Naive thymus-derived CD8-positive, alpha-beta T cell (primary cell): ENCODE measurements at regions of chr22 and their contacts with region 1.

Region 1: GRCh38 chr22:42614312-42615091 is at the start of gene POLDIP3:
- DNase-seq: peak; percentile 96 to 99 (median 98)
- ATAC-seq: peak; percentile 69 to 72
- H3K4me3 Mint-ChIP-seq: peak within 1 kb of the TSS; percentile 91 to 98 (median 96)
- H3K27ac Mint-ChIP-seq: peak within 1 kb of the TSS; percentile 98 to 100 (median 100)
- H3K4me1 Mint-ChIP-seq: peaks cover 25 to 64% (median 57%) of the 10 kb centered on the region in 4 donors
- H3K27me3 Mint-ChIP-seq: peaks cover 0 to 2% (median 0%) of the 10 kb centered on the region in 5 donors
- polyA plus RNA-seq, gene POLDIP3: 60.7 to 93.6 (median 70.5) TPM

Region 2: DNA sequence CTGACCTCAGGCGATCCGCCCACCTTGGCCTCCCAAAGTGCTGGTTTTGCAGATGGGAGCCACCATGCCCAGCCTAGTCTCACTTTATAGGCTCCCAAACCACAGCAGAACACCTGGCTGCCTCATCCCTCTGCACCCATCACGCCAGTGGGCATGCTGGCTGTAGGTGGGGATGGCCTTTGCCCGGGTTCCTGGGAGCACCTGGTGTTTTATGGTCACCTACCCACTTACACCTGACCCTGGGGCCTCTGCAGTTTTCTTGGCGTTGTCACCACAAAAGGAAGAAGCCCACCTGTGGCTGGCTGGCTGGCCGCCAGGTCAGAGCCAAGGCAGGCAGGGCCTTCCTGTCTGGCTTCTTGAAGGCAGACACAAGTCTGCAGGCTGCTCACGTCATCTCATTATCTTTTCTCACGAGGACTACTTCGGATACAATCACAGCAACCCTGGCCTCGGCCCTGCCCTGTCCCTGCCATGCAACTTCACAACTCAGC is 103.1 kb before region 1 on chr22:
- POLR2A ChIA-PET with region 1: no interaction called
- DNase-seq: no peak
- ATAC-seq: peak in 1 of 2 donors; percentile 18
- H3K4me3 Mint-ChIP-seq: peak overlapping the region in 1 of 10 donors; percentile 62
- H3K27ac Mint-ChIP-seq: peak overlapping the region in 5 of 10 donors; percentile 2 to 83 (median 48)
- H3K4me1 Mint-ChIP-seq: peaks cover 5 to 12% (median 7%) of the 10 kb centered on the region in 4 donors
- H3K27me3 Mint-ChIP-seq: no peaks in the 10 kb centered on the region

Region 3: DNA sequence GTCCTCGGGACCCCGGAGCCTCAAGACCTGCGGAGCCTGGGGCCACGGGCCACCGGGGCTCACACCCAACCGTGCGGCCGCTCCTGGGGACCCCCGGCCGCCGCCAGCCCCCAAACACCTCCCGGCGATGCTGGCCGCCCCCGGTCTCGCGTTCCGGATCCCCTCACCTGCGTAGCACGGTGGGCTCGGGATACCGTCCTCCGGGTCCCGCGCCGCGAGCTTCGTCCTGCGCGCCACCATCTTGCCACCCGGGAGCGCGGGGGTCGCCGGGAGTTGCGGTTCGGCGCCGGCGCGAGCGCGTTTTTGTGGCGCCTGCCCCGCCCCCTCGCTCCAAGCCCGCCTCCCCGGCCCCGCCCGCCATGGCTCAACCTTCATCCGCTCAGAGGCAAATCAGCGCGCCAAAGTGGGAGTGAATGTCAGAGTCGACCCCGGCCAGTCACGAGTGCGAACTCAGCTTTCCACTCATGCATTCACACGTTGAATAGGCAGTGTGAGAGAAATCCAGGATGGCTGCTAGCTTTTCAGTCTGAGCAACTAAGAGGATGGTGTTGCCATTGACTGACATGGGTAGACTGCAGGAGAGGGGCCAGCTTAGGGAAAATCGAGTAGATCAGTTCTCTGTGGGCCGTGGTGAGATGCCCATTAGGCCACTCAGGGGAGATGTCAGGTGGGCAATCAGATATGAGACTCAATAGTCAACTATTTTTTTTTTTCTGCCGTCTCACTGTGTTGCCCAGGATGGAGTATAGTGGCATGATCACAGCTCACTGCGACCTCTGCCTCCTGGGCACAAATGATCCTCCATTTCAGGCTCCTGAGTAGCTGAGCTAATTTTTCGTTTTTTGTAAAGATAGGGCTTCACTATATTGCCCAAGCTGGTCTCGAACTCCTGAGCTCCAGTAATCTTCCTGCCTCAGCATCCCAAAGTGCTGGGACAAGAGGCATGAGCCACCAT is 32.5 kb before region 1 on chr22:
- POLR2A ChIA-PET with region 1: interaction called, 21 read pairs
- DNase-seq: peak; percentile 68 to 88 (median 80)
- ATAC-seq: peak; percentile 88 to 90
- H3K4me3 Mint-ChIP-seq: peak overlapping the region; percentile 84 to 98 (median 94)
- H3K27ac Mint-ChIP-seq: peak overlapping the region; percentile 60 to 95 (median 88)
- H3K4me1 Mint-ChIP-seq: peaks cover 10 to 18% (median 16%) of the 10 kb centered on the region in 4 donors
- H3K27me3 Mint-ChIP-seq: no peaks in the 10 kb centered on the region

Region 4: DNA sequence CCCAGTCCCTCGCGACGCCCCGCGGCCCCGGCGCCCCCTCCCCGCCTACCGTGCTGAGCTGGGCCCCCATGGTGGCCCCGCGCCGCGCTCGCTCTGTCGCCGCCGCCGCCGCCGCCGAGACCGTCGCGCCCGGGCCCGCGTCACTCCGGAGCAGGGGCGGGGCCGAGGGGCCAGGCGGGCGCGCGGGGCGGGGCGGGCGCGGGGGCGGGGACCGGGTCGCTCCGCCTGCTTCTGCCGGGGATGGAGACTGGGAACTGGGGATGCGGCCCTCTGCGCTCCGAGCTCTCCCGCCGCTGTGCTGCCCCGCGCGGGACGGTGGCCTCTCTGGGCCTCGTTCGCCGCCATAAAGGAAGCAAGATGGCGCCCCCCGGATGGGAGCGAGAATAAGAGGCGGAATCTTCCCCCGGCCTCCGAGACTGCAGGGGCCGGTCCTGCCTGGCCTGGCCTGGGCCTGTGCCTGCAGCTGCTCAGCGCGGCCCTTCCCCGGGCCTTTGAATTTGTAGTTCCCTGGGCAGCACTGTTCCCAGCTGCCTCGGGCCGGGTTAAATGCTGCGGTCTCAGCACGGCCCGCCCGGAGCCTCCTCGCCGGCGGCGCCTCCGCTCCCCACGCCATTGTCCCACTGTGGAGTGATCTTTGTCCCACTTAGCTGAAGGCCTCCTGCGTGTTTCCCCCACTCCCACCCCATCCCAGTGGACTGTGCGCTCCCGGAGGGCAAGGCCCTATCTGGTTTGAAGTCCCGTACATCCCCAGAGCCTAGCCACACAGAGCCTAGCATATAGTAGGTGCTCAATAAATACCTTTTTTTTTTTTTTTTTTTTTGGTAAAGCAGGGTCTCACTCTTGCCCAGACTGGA is 35.0 kb after region 1 on chr22 and contains the start of gene CYB5R3:
- POLR2A ChIA-PET with region 1: interaction called, 54 read pairs
- DNase-seq: peak; percentile 62 to 84 (median 76)
- ATAC-seq: peak; percentile 79 to 81
- H3K4me3 Mint-ChIP-seq: peak within 1 kb of the TSS; percentile 81 to 100 (median 98)
- H3K27ac Mint-ChIP-seq: peak within 1 kb of the TSS; percentile 93 to 100 (median 98)
- H3K4me1 Mint-ChIP-seq: peaks cover 12 to 43% (median 40%) of the 10 kb centered on the region in 4 donors
- H3K27me3 Mint-ChIP-seq: no peaks in the 10 kb centered on the region
- polyA plus RNA-seq, gene CYB5R3: 37.1 to 70.2 (median 37.9) TPM

Region 5: DNA sequence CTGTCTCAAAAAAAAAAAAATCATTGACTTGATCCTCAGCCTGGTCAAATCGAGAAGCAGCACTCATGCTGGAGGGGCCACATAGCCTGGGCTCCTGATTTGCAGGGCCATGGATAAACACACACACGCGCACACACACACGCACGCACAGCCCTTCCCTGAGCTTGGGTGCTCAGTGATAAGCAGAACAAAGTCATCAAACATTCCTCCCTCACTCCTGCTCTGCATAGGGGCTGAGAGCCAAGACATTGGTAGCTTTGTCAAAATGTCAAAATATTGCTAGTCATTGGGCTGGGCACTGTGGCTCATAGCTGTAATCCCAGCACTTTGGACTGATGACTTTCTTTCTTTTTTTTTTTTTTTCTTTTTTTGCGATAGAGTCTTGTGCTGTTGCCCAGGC is 140.2 kb after region 1 on chr22:
- POLR2A ChIA-PET with region 1: no interaction called
- DNase-seq: no peak
- ATAC-seq: no peak
- H3K4me3 Mint-ChIP-seq: no peak overlapping the region
- H3K27ac Mint-ChIP-seq: no peak overlapping the region
- H3K4me1 Mint-ChIP-seq: peaks cover 0 to 6% (median 0%) of the 10 kb centered on the region in 4 donors
- H3K27me3 Mint-ChIP-seq: peaks cover 0 to 8% (median 5%) of the 10 kb centered on the region in 5 donors

Region 6: DNA sequence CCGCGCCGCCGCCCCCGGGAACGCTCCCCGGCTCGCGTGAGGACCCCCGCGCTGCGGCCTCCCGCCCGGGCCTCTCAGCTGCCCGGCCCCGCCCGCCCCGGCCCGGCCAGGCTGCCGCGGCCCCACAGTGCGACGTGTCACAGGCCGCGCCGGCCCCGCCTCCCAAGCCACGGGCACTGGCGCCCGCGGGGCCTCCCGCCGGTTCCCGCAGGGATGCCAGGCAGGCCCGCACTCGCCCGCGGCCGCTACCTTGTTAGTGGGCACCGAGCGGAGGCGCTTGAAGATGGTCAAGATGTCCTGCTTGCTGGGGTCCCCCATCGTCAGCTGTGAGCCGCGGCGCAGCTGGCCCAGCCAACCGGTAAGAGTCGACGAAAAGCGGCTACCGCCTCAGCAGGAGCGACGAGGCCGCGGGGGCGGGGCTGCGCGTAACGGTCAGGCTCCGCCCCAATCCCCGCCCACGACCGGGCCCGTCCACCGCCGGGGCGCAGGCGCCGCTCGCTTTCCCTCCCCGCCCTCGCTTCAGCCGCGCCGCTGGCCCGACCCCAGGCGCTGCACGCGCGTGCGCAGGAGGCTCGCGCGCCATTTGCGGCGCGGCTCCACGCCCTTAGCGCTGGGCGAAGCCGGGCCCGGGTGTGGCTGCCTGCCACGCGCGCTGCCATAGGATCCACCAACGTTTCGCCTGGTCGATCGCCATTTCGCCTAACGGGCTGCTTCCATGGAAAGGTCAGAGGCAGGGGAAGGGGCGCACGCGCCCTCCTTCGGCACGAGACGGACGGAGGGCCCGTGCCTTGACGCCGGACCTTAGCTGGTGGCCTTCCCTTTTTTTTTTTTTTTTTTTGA is 242.6 kb after region 1 on chr22 and contains the start of gene ARFGAP3:
- POLR2A ChIA-PET with region 1: interaction called, 10 read pairs
- DNase-seq: peak; percentile 88 to 99 (median 96)
- ATAC-seq: peak; percentile 88 to 89
- H3K4me3 Mint-ChIP-seq: peak within 1 kb of the TSS; percentile 82 to 90 (median 86)
- H3K27ac Mint-ChIP-seq: peak within 1 kb of the TSS; percentile 82 to 94 (median 90)
- H3K4me1 Mint-ChIP-seq: peaks cover 4 to 33% (median 14%) of the 10 kb centered on the region in 4 donors
- H3K27me3 Mint-ChIP-seq: no peaks in the 10 kb centered on the region
- polyA plus RNA-seq, gene ARFGAP3: 22.3 to 44.7 (median 25.1) TPM